AG04450 (cell line): ENCODE measurements at regions of chr1 and their contacts with region 1.

Region 1: GRCh38 chr1:115052454-115053083 is 22.9 kb downstream of the TSHB start:
- DNase-seq: no peak
- H3K4me3 ChIP-seq: no peak overlapping the region
- H3K27ac ChIP-seq: no peak overlapping the region
- H3K27me3 ChIP-seq: no peaks in the 10 kb centered on the region
- CTCF ChIP-seq: peak; percentile 87

Region 2: GRCh38 chr1:114828251-114828650 is 224.3 kb before region 1 on chr1:
- CTCF ChIA-PET with region 1: no interaction called
- POLR2A ChIA-PET with region 1: no interaction called
- DNase-seq: no peak
- H3K4me3 ChIP-seq: no peak overlapping the region
- H3K27ac ChIP-seq: no peak overlapping the region
- H3K27me3 ChIP-seq: no peaks in the 10 kb centered on the region
- CTCF ChIP-seq: no peak

Region 3: DNA sequence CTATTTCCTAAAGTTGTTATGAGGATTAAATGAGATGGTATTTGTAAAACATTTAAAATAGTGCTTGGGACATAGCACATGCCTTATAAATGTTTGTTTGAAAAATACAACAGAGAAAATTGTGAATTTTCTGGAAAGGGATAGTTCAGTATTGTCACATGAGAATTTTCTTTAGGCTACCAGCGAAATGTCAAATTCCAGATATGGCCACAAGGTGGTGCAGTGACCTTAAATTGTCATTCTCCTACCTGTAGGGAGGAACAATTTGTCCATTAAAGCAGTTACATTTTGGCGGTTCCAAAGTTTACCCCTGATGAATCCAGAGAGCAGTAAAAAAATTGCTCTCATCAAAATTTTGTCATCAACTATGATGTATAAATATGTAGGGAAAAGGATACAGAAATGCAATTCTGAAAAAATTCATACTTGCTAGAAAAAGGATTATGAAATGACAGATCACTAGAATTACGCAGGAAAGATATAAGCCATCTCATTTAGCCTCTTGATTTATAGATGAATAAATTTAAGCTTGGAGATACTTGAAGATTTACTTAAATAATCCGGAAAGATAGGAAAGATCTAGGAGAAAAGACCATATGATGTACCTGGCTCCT is 73.2 kb before region 1 on chr1:
- CTCF ChIA-PET with region 1: interaction called, 16 read pairs
- POLR2A ChIA-PET with region 1: no interaction called
- DNase-seq: peak; percentile 13
- H3K4me3 ChIP-seq: no peak overlapping the region
- H3K27ac ChIP-seq: no peak overlapping the region
- H3K27me3 ChIP-seq: no peaks in the 10 kb centered on the region
- CTCF ChIP-seq: peak; percentile 77

Region 4: DNA sequence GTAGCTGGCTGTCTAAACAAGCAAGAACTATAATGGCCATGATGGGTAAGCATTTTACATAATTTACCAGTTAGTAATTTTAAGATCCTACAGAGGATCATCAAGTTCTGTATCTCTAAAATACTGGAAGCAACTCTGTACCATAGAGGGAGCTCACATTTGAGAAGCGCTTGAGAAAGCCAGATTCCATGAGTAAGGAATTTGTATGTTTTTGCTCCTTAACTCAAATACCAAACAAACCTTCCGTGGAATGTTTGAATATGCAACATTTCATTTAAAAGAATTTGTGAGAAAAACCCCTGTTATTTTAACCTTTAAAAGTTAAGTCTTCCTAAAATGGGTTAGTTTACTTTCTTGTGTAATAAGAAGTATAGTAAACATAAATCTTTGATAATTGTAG is 21.0 kb before region 1 on chr1:
- CTCF ChIA-PET with region 1: interaction called, 31 read pairs
- POLR2A ChIA-PET with region 1: no interaction called
- DNase-seq: no peak
- H3K4me3 ChIP-seq: no peak overlapping the region
- H3K27ac ChIP-seq: no peak overlapping the region
- H3K27me3 ChIP-seq: peaks cover 6% of the 10 kb centered on the region
- CTCF ChIP-seq: no peak

Region 5: DNA sequence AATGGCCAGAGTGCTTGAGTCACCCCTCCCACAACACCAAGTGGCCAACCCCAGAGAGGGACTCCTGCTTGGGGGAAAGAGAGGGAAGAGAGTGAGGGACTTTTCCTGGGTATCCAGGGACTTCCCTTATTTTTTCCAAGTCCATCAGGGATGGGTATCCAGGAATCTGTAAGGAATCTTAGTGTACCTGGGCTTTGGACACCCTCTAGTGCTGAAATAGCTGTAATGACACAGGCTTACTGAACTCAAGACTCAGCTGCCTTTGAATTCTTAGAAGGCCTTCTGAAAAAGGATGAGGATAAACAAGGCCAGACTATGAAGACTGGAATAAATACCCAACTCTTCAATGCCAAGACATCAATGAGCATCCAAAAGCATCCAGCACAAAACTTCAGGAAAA is 10.9 kb before region 1 on chr1:
- CTCF ChIA-PET with region 1: interaction called, 31 read pairs
- POLR2A ChIA-PET with region 1: no interaction called
- DNase-seq: no peak
- H3K4me3 ChIP-seq: no peak overlapping the region
- H3K27ac ChIP-seq: no peak overlapping the region
- H3K27me3 ChIP-seq: no peaks in the 10 kb centered on the region
- CTCF ChIP-seq: peak; percentile 25; the same call in 1 of the 2 replicates

Region 6: DNA sequence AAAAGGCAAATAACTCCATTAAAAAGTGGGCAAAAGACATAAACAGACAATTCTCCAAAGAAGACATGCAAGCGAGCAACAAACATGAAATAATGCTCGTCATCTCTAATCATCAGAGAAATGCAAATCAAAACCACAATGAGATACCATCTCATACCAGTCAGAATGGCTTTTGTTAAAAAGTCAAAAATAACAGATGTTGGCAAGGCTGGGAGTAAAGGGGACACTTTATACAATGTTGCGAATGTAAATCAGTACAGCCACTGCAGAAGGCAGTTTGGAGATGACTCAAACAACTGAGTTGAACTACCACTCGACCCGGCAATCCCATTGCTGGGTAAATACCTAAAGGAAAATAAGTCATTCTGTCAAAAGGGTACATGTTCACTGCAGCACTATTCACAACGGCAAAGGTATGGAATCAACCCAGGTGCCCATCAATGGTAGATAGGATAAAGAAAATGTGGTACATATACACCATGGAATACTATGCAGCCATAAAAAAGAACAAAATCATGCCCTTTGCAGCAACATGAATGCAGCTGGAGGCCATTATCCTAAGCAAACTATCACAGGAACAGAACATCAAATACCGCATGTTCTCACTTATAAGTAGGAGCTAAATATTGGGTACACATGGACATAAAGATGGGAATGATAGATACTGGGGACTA is 10.8 kb after region 1 on chr1:
- CTCF ChIA-PET with region 1: interaction called, 32 read pairs
- POLR2A ChIA-PET with region 1: no interaction called
- DNase-seq: no peak
- H3K4me3 ChIP-seq: no peak overlapping the region
- H3K27ac ChIP-seq: no peak overlapping the region
- H3K27me3 ChIP-seq: no peaks in the 10 kb centered on the region
- CTCF ChIP-seq: no peak

Region 7: DNA sequence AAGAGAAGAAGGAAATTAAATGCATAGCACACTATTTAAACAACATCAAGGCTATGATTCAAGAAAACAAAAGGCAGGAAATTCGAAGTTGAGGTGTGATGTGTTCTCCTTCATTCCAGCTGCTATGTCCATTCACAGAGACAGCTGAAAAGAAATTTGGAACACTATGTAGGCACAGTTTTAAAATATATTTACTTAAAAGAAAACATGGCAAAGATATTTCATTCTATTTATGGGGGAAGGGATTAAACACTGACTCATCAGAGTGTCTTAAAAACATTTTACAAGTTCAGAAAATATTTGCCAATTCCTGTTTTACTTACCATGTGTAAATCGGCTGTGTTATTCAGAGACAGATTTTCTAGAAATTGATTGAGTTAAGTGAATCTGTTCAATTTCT is 324.8 kb after region 1 on chr1:
- CTCF ChIA-PET with region 1: no interaction called
- POLR2A ChIA-PET with region 1: no interaction called
- DNase-seq: no peak
- H3K4me3 ChIP-seq: no peak overlapping the region
- H3K27ac ChIP-seq: no peak overlapping the region
- H3K27me3 ChIP-seq: no peaks in the 10 kb centered on the region
- CTCF ChIP-seq: no peak